Activated T-helper 2 cell treated with anti-CD3 and anti-CD28 coated beads, Interferon-gamma antibody, Interleukin-2, Interleukin-4, amounts not matched to agents 10 μg/mL and 5 μg/mL and 100 μg/mL, durations not matched to agents 14 hours and 24 hours and 36 hours (primary cell): ENCODE measurements at regions of chrX and their contacts with region 1.

Region 1: DNA sequence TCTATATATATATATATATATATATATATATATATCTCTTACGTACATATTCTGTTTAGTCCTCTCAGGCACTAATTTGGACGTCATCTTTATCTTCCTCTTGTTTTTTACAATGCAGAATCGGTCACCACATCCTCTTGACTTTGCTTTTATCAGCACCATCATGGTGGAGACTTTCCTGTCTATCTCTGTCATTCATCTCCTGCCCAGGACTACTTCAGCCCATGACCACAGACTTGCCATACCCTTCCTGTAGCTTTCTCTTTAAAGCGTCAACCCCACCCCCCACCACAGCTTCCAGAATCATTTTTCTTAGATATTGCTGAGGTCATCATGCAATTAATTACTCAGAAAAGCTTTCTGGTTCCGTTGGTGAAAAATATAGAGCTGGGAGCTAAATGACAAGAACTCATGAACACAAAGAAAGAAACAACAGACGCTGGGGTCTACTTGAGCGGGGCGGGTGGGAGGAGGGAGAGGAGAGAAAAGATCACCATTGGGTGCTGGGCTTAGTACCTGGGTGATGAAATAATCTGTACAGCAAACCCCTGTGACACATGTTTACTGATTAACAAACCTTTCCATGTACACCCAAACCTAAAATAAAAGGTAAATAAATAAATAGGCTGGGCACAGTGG is 30.5 kb upstream of the PRKX start:
- DNase-seq: peak; percentile 53
- H3K4me3 Mint-ChIP-seq: peak overlapping the region; percentile 56
- H3K27ac Mint-ChIP-seq: peak overlapping the region; percentile 85
- H3K4me1 Mint-ChIP-seq: peaks cover 44% of the 10 kb centered on the region
- H3K27me3 Mint-ChIP-seq: no peaks in the 10 kb centered on the region

Region 2: DNA sequence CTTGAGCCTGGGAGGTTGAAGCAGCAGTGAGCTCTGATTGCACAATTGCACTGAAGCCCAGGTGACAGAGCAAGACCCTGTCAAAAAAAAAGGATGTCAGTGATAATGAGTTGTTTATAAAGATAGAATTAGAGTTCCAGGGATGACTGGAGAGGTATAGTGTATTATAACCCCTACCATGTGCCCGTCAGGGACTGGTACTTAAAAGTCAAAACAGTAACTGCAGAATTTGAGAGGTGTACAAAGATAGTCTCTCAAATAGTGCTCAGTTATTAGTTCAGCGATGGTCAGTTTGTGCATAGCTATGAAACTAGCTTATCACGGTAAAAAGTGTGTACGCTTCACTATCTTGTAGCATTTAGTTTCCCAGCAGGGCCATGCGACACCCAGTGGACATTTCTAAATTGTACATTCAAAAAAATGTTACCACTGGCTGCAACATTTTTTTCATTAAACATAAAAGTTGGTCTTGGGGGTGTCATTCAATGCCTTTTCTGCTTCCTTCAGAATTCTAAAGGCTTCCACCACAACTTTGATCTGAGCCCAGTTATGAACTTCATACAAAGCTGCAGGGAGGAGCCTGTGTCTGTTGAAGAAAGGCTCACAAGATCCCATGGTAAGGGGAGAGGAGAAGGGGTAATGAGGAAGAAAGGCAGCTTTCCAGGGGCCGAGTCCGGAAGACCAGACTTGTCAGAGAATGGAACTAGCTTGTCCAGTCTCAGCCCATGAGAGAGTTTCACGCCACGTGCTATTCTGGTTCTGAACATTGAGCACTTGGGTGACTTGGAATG is 924.4 kb before region 1 on chrX:
- intact Hi-C with region 1: no loop called
- DNase-seq: no peak
- H3K4me3 Mint-ChIP-seq: no peak overlapping the region
- H3K27ac Mint-ChIP-seq: no peak overlapping the region
- H3K4me1 Mint-ChIP-seq: peaks cover 3% of the 10 kb centered on the region
- H3K27me3 Mint-ChIP-seq: peaks cover 6% of the 10 kb centered on the region

Region 3: GRCh38 chrX:3678328-3678727 is 65.6 kb before region 1 on chrX:
- intact Hi-C with region 1: no loop called
- DNase-seq: no peak
- H3K4me3 Mint-ChIP-seq: no peak overlapping the region
- H3K27ac Mint-ChIP-seq: no peak overlapping the region
- H3K4me1 Mint-ChIP-seq: peaks cover 18% of the 10 kb centered on the region
- H3K27me3 Mint-ChIP-seq: no peaks in the 10 kb centered on the region

Region 4: GRCh38 chrX:3811331-3812311 is 67.7 kb after region 1 on chrX:
- intact Hi-C with region 1: loop called (anchors 2 kb)
- DNase-seq: peak; percentile 22
- H3K4me3 Mint-ChIP-seq: peak overlapping the region; percentile 5
- H3K27ac Mint-ChIP-seq: peak overlapping the region; percentile 66
- H3K4me1 Mint-ChIP-seq: peaks cover 15% of the 10 kb centered on the region
- H3K27me3 Mint-ChIP-seq: peaks cover 27% of the 10 kb centered on the region

Region 5: DNA sequence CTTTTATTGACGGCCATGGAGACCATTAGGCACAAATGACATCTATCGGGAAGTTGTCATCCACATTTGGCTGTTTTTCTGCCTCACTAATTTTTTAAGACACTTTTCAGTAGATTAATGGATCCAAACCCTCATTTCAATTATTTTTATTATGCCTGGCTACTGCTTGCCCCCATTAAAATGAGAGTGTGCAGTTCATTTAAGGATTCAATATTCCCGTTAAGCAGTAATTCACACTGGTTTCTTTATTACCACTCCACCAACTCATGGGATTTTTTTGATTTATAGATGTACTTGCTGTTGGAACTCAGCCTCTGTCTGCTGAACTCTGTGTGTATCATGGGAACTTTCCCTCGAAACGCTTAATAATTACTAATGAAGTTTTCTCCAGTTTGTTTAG is 261.4 kb after region 1 on chrX:
- intact Hi-C with region 1: no loop called
- DNase-seq: no peak
- H3K4me3 Mint-ChIP-seq: no peak overlapping the region
- H3K27ac Mint-ChIP-seq: no peak overlapping the region
- H3K4me1 Mint-ChIP-seq: no peaks in the 10 kb centered on the region
- H3K27me3 Mint-ChIP-seq: no peaks in the 10 kb centered on the region